Activated T-helper 1 cell treated with anti-CD3 and anti-CD28 coated beads, Interleukin-12 subunit alpha, Interleukin-12 subunit beta, Interleukin-2, Interleukin-4 antibody, amounts not matched to agents 30 ng/mL and 10 ng/mL and 1 ng/mL, durations not matched to agents 14 hours and 24 hours and 36 hours (primary cell): ENCODE measurements at regions of chr12 and their contacts with region 1.

Region 1: DNA sequence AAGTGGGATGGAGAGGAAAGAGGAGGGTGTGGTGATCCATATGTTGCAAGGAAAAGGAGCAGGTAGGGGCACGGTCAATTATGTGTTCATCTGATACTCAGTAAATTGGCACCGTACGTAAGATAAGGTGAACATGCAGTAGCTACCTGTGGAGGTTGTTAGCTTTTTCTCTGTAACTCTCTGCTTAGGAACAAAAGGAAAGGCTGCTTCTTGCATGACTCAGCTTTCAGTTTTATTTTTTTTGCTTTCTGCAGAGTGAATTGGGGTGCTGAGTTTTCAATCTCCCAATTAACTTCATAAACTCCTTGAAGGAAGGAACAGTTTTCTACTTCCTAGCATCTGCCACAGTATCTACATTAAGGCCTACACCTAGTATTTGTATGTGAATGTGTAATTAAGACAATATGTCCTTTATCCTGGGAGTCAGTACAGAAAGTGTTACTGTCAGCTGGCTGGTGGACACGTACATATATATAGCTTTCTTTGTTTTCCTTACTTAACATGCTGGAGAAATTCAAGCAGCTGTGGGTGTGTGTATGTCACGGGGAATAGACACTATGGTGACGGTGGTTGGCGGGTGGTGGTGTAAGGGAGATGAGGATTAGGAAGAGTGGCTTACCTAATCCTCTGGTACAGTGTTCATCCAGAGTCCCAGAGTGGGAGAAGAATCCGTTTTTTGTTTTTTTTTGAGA is 40.1 kb upstream of the WNK1 start:
- DNase-seq: no peak
- H3K4me3 Mint-ChIP-seq: no peak overlapping the region
- H3K27ac Mint-ChIP-seq: peak overlapping the region; percentile 72
- H3K4me1 Mint-ChIP-seq: peaks cover 37% of the 10 kb centered on the region
- H3K27me3 Mint-ChIP-seq: no peaks in the 10 kb centered on the region

Region 2: DNA sequence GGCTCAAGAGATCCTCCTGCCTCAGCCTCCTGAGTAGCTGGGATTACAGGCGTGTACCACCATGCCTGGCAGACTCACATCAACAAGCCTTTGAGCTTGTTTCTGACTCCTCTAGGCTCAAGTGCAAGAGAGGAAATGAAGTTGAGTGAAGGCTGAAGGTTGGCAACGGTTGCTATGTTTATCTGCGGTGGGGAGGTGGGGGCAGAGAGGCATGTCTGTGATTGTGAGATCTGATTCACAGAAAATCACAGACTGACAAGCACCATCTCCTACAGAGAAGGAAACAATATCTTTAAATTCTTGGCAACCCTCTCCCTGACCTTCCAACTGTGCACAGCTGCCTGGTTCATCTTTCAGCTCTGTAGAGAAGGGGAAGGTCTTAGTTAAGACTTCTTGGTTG is 26.9 kb before region 1 on chr12:
- intact Hi-C with region 1: loop called (anchors 1 kb)
- DNase-seq: peak; percentile 79
- H3K4me3 Mint-ChIP-seq: peak overlapping the region; percentile 15
- H3K27ac Mint-ChIP-seq: peak overlapping the region; percentile 90
- H3K4me1 Mint-ChIP-seq: peaks cover 37% of the 10 kb centered on the region
- H3K27me3 Mint-ChIP-seq: no peaks in the 10 kb centered on the region

Region 3: DNA sequence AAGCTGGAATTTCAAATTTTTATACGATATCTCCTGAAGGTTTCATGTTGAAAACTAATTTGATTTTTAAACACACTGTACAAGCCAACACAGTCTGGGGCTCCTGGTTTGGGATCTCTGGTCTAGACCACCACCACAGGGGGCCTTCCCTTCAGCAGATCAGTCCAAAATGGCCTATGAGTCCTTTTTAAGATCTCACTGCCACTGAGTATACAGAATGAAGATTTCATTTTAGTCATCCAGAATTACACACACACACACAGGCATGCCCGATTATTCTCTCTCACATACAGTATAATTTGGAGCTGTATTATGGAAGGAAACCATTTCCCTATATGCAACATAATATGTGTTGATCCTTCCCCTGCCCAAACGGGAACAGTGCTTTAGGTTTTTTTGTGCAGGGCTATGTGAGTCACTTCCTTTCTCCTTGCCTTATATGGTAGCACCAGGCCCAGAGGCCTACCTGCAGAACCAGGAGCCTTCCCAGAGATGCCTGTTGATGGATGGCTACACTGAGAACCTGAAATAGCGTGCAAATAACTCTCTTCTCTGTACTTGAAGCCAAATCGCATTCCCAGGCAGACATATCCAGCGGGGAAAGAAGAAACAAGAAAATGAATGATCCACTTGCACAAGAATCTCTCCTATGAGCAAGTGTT is 12.0 kb after region 1 on chr12:
- intact Hi-C with region 1: loop called (anchors 2 kb)
- DNase-seq: no peak
- H3K4me3 Mint-ChIP-seq: no peak overlapping the region
- H3K27ac Mint-ChIP-seq: peak overlapping the region; percentile 30
- H3K4me1 Mint-ChIP-seq: peaks cover 75% of the 10 kb centered on the region
- H3K27me3 Mint-ChIP-seq: no peaks in the 10 kb centered on the region

Region 4: GRCh38 chr12:774051-774614 is 61.8 kb after region 1 on chr12:
- intact Hi-C with region 1: no loop called
- DNase-seq: no peak
- H3K4me3 Mint-ChIP-seq: no peak overlapping the region
- H3K27ac Mint-ChIP-seq: no peak overlapping the region
- H3K4me1 Mint-ChIP-seq: peaks cover 66% of the 10 kb centered on the region
- H3K27me3 Mint-ChIP-seq: no peaks in the 10 kb centered on the region

Region 5: DNA sequence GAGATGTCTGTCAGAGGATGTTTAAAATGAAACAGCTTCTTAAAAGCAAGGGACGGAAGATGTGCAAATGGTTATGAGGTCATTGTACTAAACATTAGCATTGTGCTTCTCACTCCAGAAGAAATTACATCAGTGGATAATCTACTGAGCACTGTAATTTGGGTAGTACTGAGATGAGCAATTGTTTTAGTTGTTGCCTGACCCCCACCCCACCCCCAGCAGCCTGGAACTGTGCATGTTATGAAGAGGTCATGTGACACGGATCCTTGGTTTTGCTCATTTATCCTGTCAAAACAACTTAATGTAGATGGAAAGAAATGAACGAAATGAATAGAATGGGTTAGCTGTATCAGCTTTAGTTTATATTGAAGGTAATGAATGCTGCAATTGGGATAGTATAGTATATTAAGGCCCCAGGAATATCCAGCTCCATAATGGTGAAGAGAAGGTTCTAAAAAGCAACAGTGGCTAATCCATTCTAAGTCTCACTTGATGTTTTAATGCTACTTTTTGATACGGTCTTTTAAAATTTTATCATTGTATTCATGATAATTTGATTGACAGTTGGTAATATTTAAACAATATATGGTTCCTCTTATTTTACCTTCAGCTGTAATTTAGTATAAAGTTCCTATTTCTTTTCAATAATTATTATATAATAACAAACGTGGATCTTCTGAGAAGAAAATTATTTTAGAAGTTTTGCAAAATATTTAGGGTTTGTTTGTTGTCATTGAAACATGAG is 98.5 kb after region 1 on chr12:
- intact Hi-C with region 1: no loop called
- DNase-seq: no peak
- H3K4me3 Mint-ChIP-seq: peak overlapping the region; percentile 20
- H3K27ac Mint-ChIP-seq: peak overlapping the region; percentile 75
- H3K4me1 Mint-ChIP-seq: peaks cover 68% of the 10 kb centered on the region
- H3K27me3 Mint-ChIP-seq: no peaks in the 10 kb centered on the region

Region 6: DNA sequence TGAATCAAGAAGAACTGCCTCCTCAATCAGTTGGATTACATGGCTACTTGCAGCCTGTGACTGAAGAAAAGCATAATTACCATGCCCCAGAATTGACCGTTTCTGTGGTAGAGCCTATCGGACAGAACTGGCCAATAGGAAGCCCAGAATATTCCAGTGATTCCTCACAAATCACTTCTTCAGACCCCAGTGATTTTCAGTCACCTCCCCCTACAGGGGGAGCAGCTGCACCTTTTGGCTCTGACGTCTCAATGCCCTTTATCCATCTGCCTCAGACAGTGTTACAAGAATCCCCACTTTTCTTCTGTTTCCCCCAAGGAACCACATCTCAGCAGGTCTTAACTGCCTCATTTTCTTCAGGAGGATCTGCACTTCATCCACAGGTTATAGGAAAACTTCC is 156.4 kb after region 1 on chr12:
- intact Hi-C with region 1: no loop called
- DNase-seq: no peak
- H3K4me3 Mint-ChIP-seq: no peak overlapping the region
- H3K27ac Mint-ChIP-seq: no peak overlapping the region
- H3K4me1 Mint-ChIP-seq: peaks cover 13% of the 10 kb centered on the region
- H3K27me3 Mint-ChIP-seq: no peaks in the 10 kb centered on the region

Region 7: GRCh38 chr12:1073652-1074051 is 361.3 kb after region 1 on chr12:
- intact Hi-C with region 1: no loop called
- DNase-seq: no peak
- H3K4me3 Mint-ChIP-seq: no peak overlapping the region
- H3K27ac Mint-ChIP-seq: no peak overlapping the region
- H3K4me1 Mint-ChIP-seq: no peaks in the 10 kb centered on the region
- H3K27me3 Mint-ChIP-seq: peaks cover 3% of the 10 kb centered on the region